Natural killer cell (primary cell): ENCODE measurements at regions of chr20 and their contacts with region 1.

Region 1: GRCh38 chr20:23441850-23442313 is 2.4 kb downstream of the CSTL1 start:
- DNase-seq: peak; percentile 66 to 82
- ATAC-seq: peak; percentile 73 to 97 (median 95)
- H3K4me3 ChIP-seq: no peak overlapping the region
- H3K4me3 Mint-ChIP-seq: no peak overlapping the region
- H3K27ac ChIP-seq: no peak overlapping the region
- H3K27ac Mint-ChIP-seq: no peak overlapping the region
- H3K4me1 ChIP-seq: peaks cover 3% of the 10 kb centered on the region
- H3K4me1 Mint-ChIP-seq: peaks cover 0 to 6% of the 10 kb centered on the region in 2 donors
- H3K27me3 ChIP-seq: no peaks in the 10 kb centered on the region
- H3K27me3 Mint-ChIP-seq: no peaks in the 10 kb centered on the region
- CTCF ChIP-seq: peak; percentile 97

Region 2: GRCh38 chr20:23331450-23332350 is 110.2 kb before region 1 on chr20:
- intact Hi-C with region 1: no loop called
- DNase-seq: no peak
- ATAC-seq: no peak
- H3K4me3 ChIP-seq: no peak overlapping the region
- H3K4me3 Mint-ChIP-seq: no peak overlapping the region
- H3K27ac ChIP-seq: no peak overlapping the region
- H3K27ac Mint-ChIP-seq: no peak overlapping the region
- H3K4me1 ChIP-seq: no peaks in the 10 kb centered on the region
- H3K4me1 Mint-ChIP-seq: peaks cover 0 to 6% of the 10 kb centered on the region in 2 donors
- H3K27me3 ChIP-seq: no peaks in the 10 kb centered on the region
- H3K27me3 Mint-ChIP-seq: peaks cover 7 to 8% of the 10 kb centered on the region in 2 donors
- CTCF ChIP-seq: no peak

Region 3: DNA sequence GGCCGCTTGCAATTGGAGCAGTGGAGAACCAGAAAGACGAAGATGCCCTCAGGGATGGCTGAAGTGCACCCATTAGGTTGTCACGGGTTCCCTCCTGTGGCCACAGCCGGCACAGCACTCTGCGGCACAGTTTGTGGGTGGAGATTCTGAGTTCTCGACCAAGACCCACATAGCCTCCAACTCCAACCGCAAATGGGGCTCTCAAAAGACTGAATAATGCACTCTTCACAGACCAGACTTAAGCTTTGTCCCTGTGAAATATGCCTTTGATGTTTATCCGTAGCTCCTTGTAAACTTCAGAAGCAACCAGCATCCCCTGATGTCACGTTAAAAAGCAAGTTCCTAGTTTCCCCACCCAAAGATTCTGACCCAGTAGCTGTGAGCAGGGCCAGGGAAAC is 164.8 kb after region 1 on chr20:
- intact Hi-C with region 1: loop called (anchors 1 kb)
- DNase-seq: peak; percentile 75 to 76
- ATAC-seq: peak; percentile 87 to 100 (median 100)
- H3K4me3 ChIP-seq: no peak overlapping the region
- H3K4me3 Mint-ChIP-seq: no peak overlapping the region
- H3K27ac ChIP-seq: no peak overlapping the region
- H3K27ac Mint-ChIP-seq: peak overlapping the region in 1 of 2 donors; percentile 29
- H3K4me1 ChIP-seq: peaks cover 17% of the 10 kb centered on the region
- H3K4me1 Mint-ChIP-seq: peaks cover 11 to 12% of the 10 kb centered on the region in 2 donors
- H3K27me3 ChIP-seq: no peaks in the 10 kb centered on the region
- H3K27me3 Mint-ChIP-seq: peaks cover 6% of the 10 kb centered on the region in 2 donors
- CTCF ChIP-seq: peak; percentile 82